ENCODE measurements at regions of chr11 and their contacts with region 1.

Region 1: GRCh38 chr11:9613118-9613829 is 39.8 kb downstream of the WEE1 start:
- DNase-seq: peak; percentile 88
- H3K4me3 Mint-ChIP-seq: peak overlapping the region; percentile 85
- H3K27ac Mint-ChIP-seq: peak overlapping the region; percentile 97
- H3K4me1 Mint-ChIP-seq: peaks cover 27% of the 10 kb centered on the region
- H3K27me3 Mint-ChIP-seq: peaks cover 3% of the 10 kb centered on the region

Region 2: GRCh38 chr11:9565822-9566560 is 47.3 kb before region 1 on chr11:
- CTCF ChIA-PET with region 1: interaction called, 11 read pairs
- POLR2A ChIA-PET with region 1: interaction called, 6 read pairs
- DNase-seq: peak; percentile 73
- H3K4me3 Mint-ChIP-seq: peak overlapping the region; percentile 52
- H3K27ac Mint-ChIP-seq: peak overlapping the region; percentile 83
- H3K4me1 Mint-ChIP-seq: peaks cover 42% of the 10 kb centered on the region
- H3K27me3 Mint-ChIP-seq: peaks cover 2% of the 10 kb centered on the region

Region 3: GRCh38 chr11:9594267-9595046 is 18.8 kb before region 1 on chr11:
- CTCF ChIA-PET with region 1: interaction called, 79 read pairs
- POLR2A ChIA-PET with region 1: interaction called, 10 read pairs
- DNase-seq: no peak
- H3K4me3 Mint-ChIP-seq: no peak overlapping the region
- H3K27ac Mint-ChIP-seq: no peak overlapping the region
- H3K4me1 Mint-ChIP-seq: no peaks in the 10 kb centered on the region
- H3K27me3 Mint-ChIP-seq: peaks cover 2% of the 10 kb centered on the region

Region 4: DNA sequence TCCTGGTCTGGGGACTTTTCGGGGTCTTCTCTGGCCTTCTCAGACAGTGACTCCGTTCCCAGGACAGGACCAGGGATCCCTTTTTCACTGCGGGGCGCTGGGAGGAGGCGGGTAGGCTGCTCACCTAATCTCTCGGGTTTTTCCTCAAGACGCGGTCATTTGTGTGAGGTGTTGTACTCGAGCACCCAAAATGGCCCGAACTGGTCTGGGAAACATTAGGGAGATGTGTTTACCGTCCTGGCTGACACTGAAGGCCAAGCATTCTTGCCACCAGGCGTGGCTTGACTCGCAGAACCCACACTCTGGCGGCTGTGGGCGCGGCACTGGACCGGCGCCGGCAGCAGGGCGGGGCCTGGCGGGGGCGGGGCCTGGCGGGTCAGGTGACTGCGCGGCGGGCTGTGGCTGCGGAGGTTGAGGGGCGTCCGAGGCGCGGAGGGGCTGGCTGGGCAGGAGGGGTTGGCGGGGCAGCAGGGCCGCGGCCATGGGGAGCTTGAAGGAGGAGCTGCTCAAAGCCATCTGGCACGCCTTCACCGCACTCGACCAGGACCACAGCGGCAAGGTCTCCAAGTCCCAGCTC is 50.5 kb after region 1 on chr11 and contains the start of gene SWAP70:
- CTCF ChIA-PET with region 1: interaction called, 10 read pairs
- POLR2A ChIA-PET with region 1: interaction called, 6 read pairs
- DNase-seq: peak; percentile 80
- H3K4me3 Mint-ChIP-seq: peak within 1 kb of the TSS; percentile 81
- H3K27ac Mint-ChIP-seq: peak within 1 kb of the TSS; percentile 43
- H3K4me1 Mint-ChIP-seq: peaks cover 21% of the 10 kb centered on the region
- H3K27me3 Mint-ChIP-seq: peaks cover 27% of the 10 kb centered on the region
- total RNA-seq, gene SWAP70: 8.6 to 9.1 TPM

Region 5: GRCh38 chr11:9757809-9758636 is 144.7 kb after region 1 on chr11:
- CTCF ChIA-PET with region 1: interaction called, 15 read pairs
- POLR2A ChIA-PET with region 1: no interaction called
- DNase-seq: peak; percentile 91
- H3K4me3 Mint-ChIP-seq: peak overlapping the region; percentile 70
- H3K27ac Mint-ChIP-seq: peak overlapping the region; percentile 44
- H3K4me1 Mint-ChIP-seq: peaks cover 44% of the 10 kb centered on the region
- H3K27me3 Mint-ChIP-seq: no peaks in the 10 kb centered on the region

Region 6: DNA sequence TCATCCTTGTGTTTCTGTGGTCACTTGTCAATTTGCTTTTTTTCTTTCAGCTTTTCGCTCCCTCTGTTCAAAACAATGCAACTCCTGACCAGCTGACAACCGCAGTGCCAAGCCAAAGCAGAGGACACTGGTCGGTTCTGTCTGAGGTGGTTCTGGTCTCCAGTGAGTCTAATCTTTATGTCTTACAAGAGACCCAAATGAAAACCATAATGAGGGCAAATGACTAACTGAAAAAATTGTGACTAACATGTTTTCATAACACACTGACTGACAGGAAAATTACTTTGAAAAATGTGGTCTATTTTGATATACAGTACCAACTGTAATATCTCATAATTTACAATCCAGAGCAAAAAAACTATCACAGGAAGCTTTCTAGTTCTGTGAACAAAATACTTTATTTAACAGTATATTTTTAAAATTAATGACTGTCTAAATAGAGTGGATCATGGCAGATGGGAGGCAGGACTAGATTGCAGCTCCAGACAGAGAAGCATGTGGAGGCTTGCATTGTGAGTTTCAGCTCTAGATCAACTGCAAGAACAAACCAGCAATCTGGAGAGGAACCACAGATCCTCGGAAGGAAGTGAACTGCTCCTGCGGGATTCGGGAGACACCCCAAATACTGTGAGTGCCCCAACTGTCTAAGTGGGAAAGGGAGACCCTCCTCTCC is 369.0 kb after region 1 on chr11:
- CTCF ChIA-PET with region 1: no interaction called
- POLR2A ChIA-PET with region 1: no interaction called
- DNase-seq: no peak
- H3K4me3 Mint-ChIP-seq: no peak overlapping the region
- H3K27ac Mint-ChIP-seq: no peak overlapping the region
- H3K4me1 Mint-ChIP-seq: no peaks in the 10 kb centered on the region
- H3K27me3 Mint-ChIP-seq: no peaks in the 10 kb centered on the region

Measured in activated CD4-positive, alpha-beta memory T cell treated with anti-CD3 and anti-CD28 coated beads, Interleukin-2, amount 10 ng/mL, durations not matched to agents 7 days and 5 days (primary cell).